Activated CD8-positive, alpha-beta memory T cell treated with anti-CD3 and anti-CD28 coated beads, Interleukin-2, amount 10 ng/mL, durations not matched to agents 7 days and 5 days (primary cell): ENCODE measurements at regions of chr12 and their contacts with region 1.

Region 1: DNA sequence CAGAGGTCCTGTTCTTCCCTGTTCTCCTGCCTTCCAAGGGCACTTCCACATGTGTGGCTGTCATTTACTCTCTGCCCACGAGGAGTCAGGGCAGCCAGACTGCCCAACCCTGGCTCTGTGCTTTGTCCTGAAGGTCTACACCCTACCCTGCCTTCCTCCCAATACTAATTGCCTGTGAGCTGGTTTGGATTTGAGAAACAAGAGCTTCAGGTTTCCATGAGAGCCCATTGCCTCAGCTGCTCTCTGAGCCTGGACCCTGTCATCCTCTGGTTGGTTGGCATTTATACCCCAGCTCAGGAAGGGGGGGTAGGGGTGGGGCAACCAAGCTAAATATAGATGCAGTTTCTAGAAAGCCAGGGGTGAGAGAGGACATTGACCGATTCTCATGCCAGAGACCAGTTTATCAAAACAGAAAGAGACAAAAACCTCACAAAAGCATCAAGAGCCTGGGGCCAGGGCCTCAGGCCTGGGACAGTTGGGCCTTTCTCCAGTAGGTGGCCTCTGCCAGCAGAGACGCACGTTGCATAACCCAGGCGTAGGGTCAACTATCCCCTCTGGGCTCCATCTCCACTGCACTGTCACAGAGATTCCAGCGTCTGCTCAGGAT is 34.5 kb downstream of the VDR start:
- DNase-seq: no peak
- ATAC-seq: no peak
- H3K4me3 Mint-ChIP-seq: no peak overlapping the region
- H3K27ac Mint-ChIP-seq: peak overlapping the region; percentile 73
- H3K4me1 Mint-ChIP-seq: peaks cover 69% of the 10 kb centered on the region
- H3K27me3 Mint-ChIP-seq: no peaks in the 10 kb centered on the region

Region 2: GRCh38 chr12:47882781-47883546 is 12.7 kb after region 1 on chr12:
- CTCF ChIA-PET with region 1: interaction called, 34 read pairs
- DNase-seq: peak; percentile 68
- ATAC-seq: peak; percentile 43
- H3K4me3 Mint-ChIP-seq: peak overlapping the region; percentile 73
- H3K27ac Mint-ChIP-seq: peak overlapping the region; percentile 96
- H3K4me1 Mint-ChIP-seq: peaks cover 80% of the 10 kb centered on the region
- H3K27me3 Mint-ChIP-seq: no peaks in the 10 kb centered on the region

Region 3: DNA sequence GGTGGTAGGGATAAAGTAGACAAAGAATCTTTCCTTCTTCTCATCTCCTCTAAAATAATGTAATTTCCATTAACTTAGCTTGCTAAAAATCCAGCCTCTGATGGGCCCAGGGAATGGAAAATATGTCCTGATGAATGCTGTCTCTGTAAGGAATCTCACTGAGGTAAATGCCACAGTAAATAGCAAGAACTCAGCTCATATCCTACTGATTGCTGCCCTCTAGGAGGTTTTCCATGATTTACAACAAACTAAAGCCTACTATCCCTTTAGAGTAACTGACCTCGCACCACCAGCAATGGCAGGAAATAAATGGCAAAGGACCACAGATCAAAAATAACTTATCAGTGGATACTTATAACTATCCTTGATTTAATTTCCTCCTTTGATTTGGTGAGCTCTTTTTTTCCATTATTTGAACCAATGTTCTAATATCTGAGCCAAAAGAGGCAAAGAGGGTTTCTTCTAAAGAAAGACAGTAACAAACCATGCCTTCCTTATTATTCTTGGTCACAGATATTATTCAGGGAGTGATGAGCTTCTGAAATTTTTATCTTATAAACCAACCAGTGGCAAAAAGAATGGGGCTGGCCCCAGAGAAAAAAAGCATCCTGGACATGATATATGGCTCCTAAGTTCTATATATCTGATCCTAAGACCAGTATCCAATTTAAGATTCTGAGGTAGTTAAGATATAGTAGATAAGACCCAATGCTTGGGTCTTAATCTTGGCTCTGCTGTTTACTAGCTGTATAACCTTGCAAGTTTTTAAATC is 191.9 kb after region 1 on chr12:
- CTCF ChIA-PET with region 1: no interaction called
- DNase-seq: no peak
- ATAC-seq: no peak
- H3K4me3 Mint-ChIP-seq: no peak overlapping the region
- H3K27ac Mint-ChIP-seq: no peak overlapping the region
- H3K4me1 Mint-ChIP-seq: no peaks in the 10 kb centered on the region
- H3K27me3 Mint-ChIP-seq: no peaks in the 10 kb centered on the region

Region 4: GRCh38 chr12:48119078-48119833 is 249.0 kb after region 1 on chr12 and contains the start of gene PFKM:
- CTCF ChIA-PET with region 1: no interaction called
- DNase-seq: peak; percentile 87
- ATAC-seq: peak; percentile 100
- H3K4me3 Mint-ChIP-seq: peak within 1 kb of the TSS; percentile 99
- H3K27ac Mint-ChIP-seq: peak within 1 kb of the TSS; percentile 79
- H3K4me1 Mint-ChIP-seq: peaks cover 24% of the 10 kb centered on the region
- H3K27me3 Mint-ChIP-seq: peaks cover 19% of the 10 kb centered on the region
- total RNA-seq, gene PFKM: 25.0 to 28.3 TPM